ENCODE measurements at regions of chr2 and their contacts with region 1.

Region 1: GRCh38 chr2:191245046-191245868 is at the start of gene MYO1B:
- DNase-seq: peak; percentile 90
- H3K4me3 Mint-ChIP-seq: peak within 1 kb of the TSS; percentile 91
- H3K27ac Mint-ChIP-seq: peak within 1 kb of the TSS; percentile 90
- H3K4me1 Mint-ChIP-seq: peaks cover 35% of the 10 kb centered on the region
- H3K27me3 Mint-ChIP-seq: no peaks in the 10 kb centered on the region
- CTCF ChIP-seq: peak; percentile 47
- total RNA-seq, gene MYO1B: 204 and 241 TPM in 2 replicates

Region 2: GRCh38 chr2:191171708-191172355 is 73.4 kb before region 1 on chr2:
- CTCF ChIA-PET with region 1: interaction called, 18 read pairs
- POLR2A ChIA-PET with region 1: interaction called, 144 read pairs
- intact Hi-C with region 1: loop called (anchors 1 kb)
- DNase-seq: peak; percentile 98
- H3K4me3 Mint-ChIP-seq: peak overlapping the region; percentile 33
- H3K27ac Mint-ChIP-seq: peak overlapping the region; percentile 79
- H3K4me1 Mint-ChIP-seq: peaks cover 61% of the 10 kb centered on the region
- H3K27me3 Mint-ChIP-seq: no peaks in the 10 kb centered on the region
- CTCF ChIP-seq: no peak

Region 3: GRCh38 chr2:191202881-191203397 is 42.3 kb before region 1 on chr2:
- CTCF ChIA-PET with region 1: interaction called, 5 read pairs
- POLR2A ChIA-PET with region 1: interaction called, 22 read pairs
- intact Hi-C with region 1: no loop called
- DNase-seq: peak; percentile 69
- H3K4me3 Mint-ChIP-seq: peak overlapping the region; percentile 49
- H3K27ac Mint-ChIP-seq: peak overlapping the region; percentile 98
- H3K4me1 Mint-ChIP-seq: peaks cover 23% of the 10 kb centered on the region
- H3K27me3 Mint-ChIP-seq: no peaks in the 10 kb centered on the region
- CTCF ChIP-seq: no peak

Region 4: GRCh38 chr2:191226196-191226595 is 19.1 kb before region 1 on chr2:
- CTCF ChIA-PET with region 1: interaction called, 6 read pairs
- POLR2A ChIA-PET with region 1: interaction called, 10 read pairs
- intact Hi-C with region 1: no loop called
- DNase-seq: no peak
- H3K4me3 Mint-ChIP-seq: no peak overlapping the region
- H3K27ac Mint-ChIP-seq: no peak overlapping the region
- H3K4me1 Mint-ChIP-seq: peaks cover 26% of the 10 kb centered on the region
- H3K27me3 Mint-ChIP-seq: no peaks in the 10 kb centered on the region
- CTCF ChIP-seq: no peak

Region 5: DNA sequence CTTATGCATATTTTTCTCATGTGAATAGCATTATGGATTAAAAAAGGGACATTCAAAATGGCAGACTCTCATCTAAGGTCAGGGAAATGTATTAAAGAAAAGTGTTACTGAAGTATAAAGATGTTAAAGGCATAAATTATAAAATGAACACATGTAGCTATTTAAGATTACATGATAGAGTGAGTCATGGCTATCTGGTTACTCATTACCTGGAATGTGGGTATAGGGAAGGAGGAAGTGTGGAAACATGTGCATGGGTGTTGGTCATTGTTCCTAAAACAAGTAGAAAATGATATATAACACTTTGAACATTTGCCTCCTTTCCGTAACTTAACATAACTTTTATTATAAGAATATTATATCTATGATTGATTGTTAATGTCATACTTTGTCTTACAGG is 66.4 kb after region 1 on chr2:
- CTCF ChIA-PET with region 1: no interaction called
- POLR2A ChIA-PET with region 1: interaction called, 11 read pairs
- intact Hi-C with region 1: no loop called
- DNase-seq: peak; percentile 86
- H3K4me3 Mint-ChIP-seq: no peak overlapping the region
- H3K27ac Mint-ChIP-seq: peak overlapping the region; percentile 72
- H3K4me1 Mint-ChIP-seq: peaks cover 38% of the 10 kb centered on the region
- H3K27me3 Mint-ChIP-seq: no peaks in the 10 kb centered on the region
- CTCF ChIP-seq: no peak

Region 6: GRCh38 chr2:191369036-191369435 is 123.8 kb after region 1 on chr2:
- CTCF ChIA-PET with region 1: no interaction called
- POLR2A ChIA-PET with region 1: no interaction called
- intact Hi-C with region 1: loop called (anchors 1 kb)
- DNase-seq: no peak
- H3K4me3 Mint-ChIP-seq: no peak overlapping the region
- H3K27ac Mint-ChIP-seq: no peak overlapping the region
- H3K4me1 Mint-ChIP-seq: no peaks in the 10 kb centered on the region
- H3K27me3 Mint-ChIP-seq: no peaks in the 10 kb centered on the region
- CTCF ChIP-seq: peak; percentile 35

Region 7: GRCh38 chr2:191421950-191422349 is 176.7 kb after region 1 on chr2:
- CTCF ChIA-PET with region 1: no interaction called
- POLR2A ChIA-PET with region 1: no interaction called
- intact Hi-C with region 1: no loop called
- DNase-seq: no peak
- H3K4me3 Mint-ChIP-seq: no peak overlapping the region
- H3K27ac Mint-ChIP-seq: no peak overlapping the region
- H3K4me1 Mint-ChIP-seq: no peaks in the 10 kb centered on the region
- H3K27me3 Mint-ChIP-seq: no peaks in the 10 kb centered on the region
- CTCF ChIP-seq: no peak

Region 8: DNA sequence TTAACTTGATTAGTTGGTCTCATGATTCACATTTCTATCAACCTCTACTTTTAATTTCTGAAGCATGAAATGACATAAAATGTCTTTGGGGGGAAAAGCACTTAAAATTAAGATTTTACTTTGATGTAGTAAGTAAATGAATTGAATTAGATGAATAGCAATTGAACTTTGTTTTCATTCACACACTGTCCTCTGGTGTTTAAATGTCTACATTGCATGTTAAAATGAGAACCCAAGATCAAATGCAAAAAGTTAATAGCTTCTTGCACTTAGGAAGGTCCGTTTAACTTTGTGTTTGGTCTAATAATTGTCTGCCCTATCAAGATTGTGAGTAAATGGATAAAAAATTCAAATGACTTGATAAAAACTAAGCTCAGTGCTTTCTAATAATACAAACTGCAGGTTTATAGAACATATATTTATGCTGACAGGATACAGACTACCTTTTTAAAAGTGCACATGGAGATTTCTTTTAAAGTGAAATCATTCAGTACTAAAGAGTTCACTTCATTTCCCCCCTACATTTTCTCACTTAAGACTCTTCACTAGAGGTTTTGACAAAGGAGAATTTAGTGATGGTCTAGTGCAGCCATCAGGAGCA is 276.5 kb after region 1 on chr2:
- CTCF ChIA-PET with region 1: interaction called, 5 read pairs
- POLR2A ChIA-PET with region 1: no interaction called
- intact Hi-C with region 1: loop called (anchors 5 kb)
- DNase-seq: peak; percentile 57
- H3K4me3 Mint-ChIP-seq: no peak overlapping the region
- H3K27ac Mint-ChIP-seq: no peak overlapping the region
- H3K4me1 Mint-ChIP-seq: no peaks in the 10 kb centered on the region
- H3K27me3 Mint-ChIP-seq: no peaks in the 10 kb centered on the region
- CTCF ChIP-seq: peak; percentile 51

Measured in MCF 10A (cell line).